SK-N-SH (cell line): ENCODE measurements at regions of chrX and their contacts with region 1.

Region 1: DNA sequence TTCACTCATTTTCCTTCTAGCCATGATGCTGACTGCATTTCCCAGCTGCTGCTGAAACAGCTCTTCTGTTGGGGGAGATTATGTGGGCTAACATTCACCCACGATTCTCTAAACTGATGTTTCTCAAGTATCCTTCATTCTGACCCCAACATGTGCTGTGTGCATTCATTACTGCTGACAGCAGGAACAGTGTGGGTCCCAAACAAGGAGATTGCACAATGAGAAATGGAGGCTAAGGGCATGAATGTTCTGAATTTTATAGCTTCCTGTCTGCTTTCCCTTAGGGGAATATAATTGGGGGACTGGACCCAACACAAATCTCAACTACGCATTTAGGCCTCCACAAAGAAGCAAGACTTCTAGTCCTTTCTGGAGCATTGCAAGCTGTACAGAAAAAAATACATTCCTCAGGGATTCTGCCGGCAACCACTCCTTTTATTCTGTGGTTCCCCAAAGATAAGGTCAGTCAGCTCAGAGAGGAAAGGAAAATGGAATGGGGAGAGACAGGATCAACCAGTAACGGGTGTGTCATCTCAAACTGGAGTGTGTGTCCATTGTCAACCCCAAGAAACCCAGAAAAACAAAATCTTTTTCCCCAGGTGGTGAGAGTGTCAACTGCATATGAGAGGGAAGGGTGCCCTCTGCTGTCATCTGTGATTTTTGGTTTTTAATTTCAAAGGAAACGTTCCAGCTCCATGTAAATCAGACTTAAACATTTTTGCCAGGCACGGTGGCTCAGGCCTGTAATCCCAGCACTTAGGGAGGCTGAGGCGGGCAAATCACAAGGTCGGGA is 81.5 kb upstream of the EGFL6 start:
- DNase-seq: peak; percentile 48
- H3K4me3 ChIP-seq: no peak overlapping the region; a peak in 1 of 4 replicates
- H3K27ac ChIP-seq: peak overlapping the region; percentile 92 to 97
- H3K4me1 ChIP-seq: peaks cover 0 to 11% of the 10 kb centered on the region in 2 experiments; a peak in 3 of 4 replicates
- H3K27me3 ChIP-seq: no peaks in the 10 kb centered on the region
- CTCF ChIP-seq: peak; percentile 78
- EP300 ChIP-seq: peak in 1 of 2 experiments; percentile 34; a peak in 1 of 4 replicates
- RAD21 ChIP-seq: peak; percentile 88

Region 2: DNA sequence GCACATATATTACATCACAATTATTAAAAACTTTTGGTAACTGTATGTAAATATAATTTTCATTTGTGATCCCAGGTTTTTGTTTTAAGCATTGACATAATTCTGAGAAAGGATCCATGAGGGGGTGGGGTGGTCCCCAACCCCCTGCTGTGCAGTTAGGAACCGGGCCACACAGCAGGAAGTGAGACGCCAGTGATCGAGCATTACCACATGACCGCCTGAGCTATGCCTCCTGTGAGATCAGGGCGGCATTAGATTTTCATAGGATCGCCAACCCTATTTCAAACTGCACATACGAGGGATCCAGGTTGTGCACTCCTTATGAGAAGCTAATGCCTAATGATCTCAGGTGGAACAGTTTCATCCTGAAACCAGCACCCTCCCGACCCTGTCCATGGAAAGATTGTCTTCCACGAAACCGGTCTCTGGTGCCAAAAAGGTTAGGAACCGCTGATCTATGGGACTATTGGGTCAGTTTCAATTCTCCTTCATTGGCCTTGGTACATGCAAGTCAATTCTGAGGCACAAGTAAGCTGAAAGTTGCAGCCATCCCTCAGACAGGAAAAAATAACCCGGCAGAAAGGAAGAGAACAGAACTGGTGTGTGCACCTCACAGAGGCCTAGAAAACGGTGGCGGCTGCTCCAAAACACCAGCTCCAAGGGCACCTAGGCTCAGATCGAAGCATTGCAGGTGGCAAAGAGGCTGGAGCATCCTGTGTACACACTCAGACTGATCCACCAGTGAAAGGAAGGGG is 520.0 kb before region 1 on chrX:
- CTCF ChIA-PET with region 1: interaction called, 10 read pairs
- POLR2A ChIA-PET with region 1: no interaction called
- DNase-seq: no peak
- H3K4me3 ChIP-seq: no peak overlapping the region
- H3K27ac ChIP-seq: no peak overlapping the region
- H3K4me1 ChIP-seq: peaks cover 0 to 5% of the 10 kb centered on the region in 2 experiments; a peak in 1 of 4 replicates
- H3K27me3 ChIP-seq: no peaks in the 10 kb centered on the region
- CTCF ChIP-seq: no peak
- EP300 ChIP-seq: no peak
- RAD21 ChIP-seq: no peak

Region 3: DNA sequence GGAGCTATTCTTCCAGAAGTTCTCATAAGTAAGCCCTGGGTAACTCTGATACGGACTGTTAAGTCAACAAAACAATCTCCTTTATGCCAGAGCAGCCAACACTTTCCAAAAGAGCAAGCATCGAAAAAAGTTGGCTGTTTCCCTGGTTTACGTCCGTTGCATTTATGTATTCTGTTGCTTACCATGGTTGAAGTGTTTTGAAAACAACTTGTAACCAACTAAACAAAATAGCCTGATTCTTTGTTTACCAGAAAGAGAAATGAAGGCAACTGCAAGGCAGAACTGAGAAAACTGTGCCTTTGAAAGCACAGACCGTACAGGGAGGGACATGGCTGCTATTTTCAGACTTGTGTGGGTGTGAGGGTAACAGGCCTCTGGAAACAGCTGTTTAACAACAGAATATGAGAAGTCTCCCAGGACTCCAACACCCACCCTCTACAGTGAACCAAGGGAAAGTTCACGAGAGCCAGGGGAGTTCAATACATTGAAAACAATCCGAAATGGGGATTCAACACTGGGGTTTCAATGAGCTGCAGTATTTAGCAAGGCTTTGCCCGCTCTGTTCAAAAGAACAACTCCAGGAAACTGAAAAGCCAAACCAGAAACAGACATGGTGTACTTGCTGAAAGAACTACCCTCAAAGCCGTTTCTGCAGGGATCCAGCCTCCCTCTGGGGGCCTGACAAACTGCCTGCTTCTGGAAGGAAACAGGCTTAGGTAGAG is 14.3 kb before region 1 on chrX:
- CTCF ChIA-PET with region 1: interaction called, 12 read pairs
- POLR2A ChIA-PET with region 1: no interaction called
- DNase-seq: no peak
- H3K4me3 ChIP-seq: no peak overlapping the region
- H3K27ac ChIP-seq: peak overlapping the region; percentile 24 to 57; a peak in 2 of 4 replicates
- H3K4me1 ChIP-seq: peaks cover 0 to 6% of the 10 kb centered on the region in 2 experiments; a peak in 3 of 4 replicates
- H3K27me3 ChIP-seq: no peaks in the 10 kb centered on the region
- CTCF ChIP-seq: no peak
- EP300 ChIP-seq: no peak
- RAD21 ChIP-seq: no peak

Region 4: GRCh38 chrX:13569479-13570260 is 81.7 kb after region 1 on chrX and contains the start of gene EGFL6:
- CTCF ChIA-PET with region 1: no interaction called
- POLR2A ChIA-PET with region 1: no interaction called
- DNase-seq: peak; percentile 28
- H3K4me3 ChIP-seq: no peak within 1 kb of the TSS; a peak in 1 of 4 replicates
- H3K27ac ChIP-seq: no peak within 1 kb of the TSS
- H3K4me1 ChIP-seq: no peaks in the 10 kb centered on the region; a peak in 1 of 4 replicates
- H3K27me3 ChIP-seq: peaks cover 40% of the 10 kb centered on the region
- CTCF ChIP-seq: no peak
- EP300 ChIP-seq: no peak
- RAD21 ChIP-seq: no peak
- polyA plus RNA-seq, gene EGFL6: 0.19 and 0.25 TPM in 2 replicates